CD4-positive, alpha-beta memory T cell (primary cell): ENCODE measurements at regions of chr5 and their contacts with region 1.

Region 1: GRCh38 chr5:65861830-65862241 is 64.5 kb upstream of the ERBIN start:
- DNase-seq: no peak
- H3K4me3 ChIP-seq: no peak overlapping the region
- H3K4me3 Mint-ChIP-seq: no peak overlapping the region
- H3K27ac ChIP-seq: no peak overlapping the region
- H3K27ac Mint-ChIP-seq: no peak overlapping the region
- H3K4me1 ChIP-seq: peaks cover 10% of the 10 kb centered on the region
- H3K4me1 Mint-ChIP-seq: peaks cover 11 to 18% (median 14%) of the 10 kb centered on the region in 4 donors
- H3K27me3 ChIP-seq: no peaks in the 10 kb centered on the region
- H3K27me3 Mint-ChIP-seq: peaks cover 0 to 5% of the 10 kb centered on the region in 2 donors

Region 2: DNA sequence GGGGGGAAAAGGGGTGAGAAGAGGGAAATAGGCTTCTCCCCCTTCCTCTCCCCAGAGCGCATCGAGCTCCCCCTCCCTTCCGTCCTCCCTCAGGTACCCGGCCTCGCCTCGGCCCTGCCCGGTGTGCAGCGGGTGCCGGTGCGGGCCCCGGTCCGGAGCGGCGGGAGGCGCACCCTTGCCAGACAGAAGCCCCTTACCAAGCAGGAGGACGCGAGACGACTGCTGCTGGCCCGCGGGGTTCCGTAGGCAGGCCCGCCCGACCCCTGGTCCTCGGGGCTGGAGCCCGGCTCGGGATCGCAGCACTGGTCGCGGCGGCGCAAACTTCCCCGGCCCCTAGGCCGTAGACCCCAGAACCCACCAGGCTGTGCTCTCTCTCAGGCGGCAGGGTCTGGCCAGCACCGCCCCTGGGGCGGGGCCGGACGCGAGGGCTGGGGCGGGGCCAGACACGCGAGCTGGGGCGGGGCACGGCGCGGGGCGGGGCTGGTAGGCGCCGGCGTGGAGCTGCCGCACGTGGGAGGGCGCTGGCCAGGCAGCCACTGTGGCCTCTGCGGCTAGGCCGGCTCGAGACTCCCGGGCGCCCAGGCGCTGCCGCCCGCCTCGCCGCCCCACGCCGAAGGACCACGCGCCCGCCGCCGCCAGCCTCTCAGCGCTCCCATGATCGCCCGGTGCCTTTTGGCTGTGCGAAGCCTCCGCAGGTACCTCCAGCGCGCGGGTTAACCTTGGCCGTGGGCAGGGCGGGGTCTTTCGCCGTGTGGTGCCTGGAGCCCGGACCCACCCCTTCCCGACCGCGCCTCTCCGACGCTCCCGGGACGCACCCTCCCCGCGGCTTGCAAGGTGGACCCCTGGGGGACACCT is 139.9 kb before region 1 on chr5 and contains the starts of genes NLN and SGTB:
- CTCF ChIA-PET with region 1: no interaction called
- POLR2A ChIA-PET with region 1: no interaction called
- intact Hi-C with region 1: no loop called
- DNase-seq: peak; percentile 78 to 86 (median 82)
- H3K4me3 ChIP-seq: peak within 1 kb of the TSS; percentile 57 to 64
- H3K4me3 Mint-ChIP-seq: peak within 1 kb of the TSS; percentile 88 to 98 (median 94)
- H3K27ac ChIP-seq: peak within 1 kb of the TSS; percentile 91
- H3K27ac Mint-ChIP-seq: peak within 1 kb of the TSS in 6 of 7 donors; percentile 75 to 93 (median 90)
- H3K4me1 ChIP-seq: peaks cover 46% of the 10 kb centered on the region
- H3K4me1 Mint-ChIP-seq: peaks cover 9 to 22% (median 14%) of the 10 kb centered on the region in 4 donors
- H3K27me3 ChIP-seq: no peaks in the 10 kb centered on the region
- H3K27me3 Mint-ChIP-seq: no peaks in the 10 kb centered on the region
- total RNA-seq, gene NLN: 2.3 to 2.4 TPM
- total RNA-seq, gene SGTB: 42.6 to 46.5 TPM

Region 3: DNA sequence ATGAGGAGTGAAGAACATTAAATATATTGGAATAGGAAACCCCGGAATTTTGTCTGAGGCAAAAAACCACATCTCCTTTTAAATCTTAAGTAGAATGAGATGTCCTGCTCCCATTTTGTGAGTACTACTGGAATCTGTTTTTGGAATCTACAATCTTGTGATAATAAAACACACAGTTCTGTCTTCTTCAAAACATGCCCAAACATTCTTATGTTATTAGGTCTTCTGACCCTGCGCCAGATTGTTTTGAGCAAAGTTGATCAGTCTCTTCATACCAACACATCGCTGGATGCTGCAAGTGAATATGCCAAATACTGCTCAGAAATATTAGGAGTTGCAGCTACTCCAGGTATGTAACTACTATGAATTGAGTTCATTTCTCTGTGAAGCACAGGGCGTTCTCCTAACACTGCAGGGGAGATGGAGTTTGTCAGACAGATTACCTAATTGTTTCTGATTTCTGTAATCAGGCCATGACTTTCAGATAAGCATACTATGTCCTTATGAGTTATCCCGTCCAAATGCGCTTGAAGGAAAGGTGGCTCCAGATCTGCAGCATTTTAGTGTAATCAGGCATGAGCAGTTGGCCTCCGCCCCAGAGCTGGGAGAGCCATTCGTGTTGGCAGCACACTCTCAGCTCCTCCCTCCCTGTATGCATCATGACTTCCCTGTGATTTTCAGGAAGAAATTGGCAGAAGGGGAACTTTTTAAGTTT is 51.9 kb before region 1 on chr5:
- CTCF ChIA-PET with region 1: interaction called, 3 read pairs
- POLR2A ChIA-PET with region 1: no interaction called
- intact Hi-C with region 1: loop called (anchors 10 kb)
- DNase-seq: no peak
- H3K4me3 ChIP-seq: no peak overlapping the region
- H3K4me3 Mint-ChIP-seq: no peak overlapping the region
- H3K27ac ChIP-seq: no peak overlapping the region
- H3K27ac Mint-ChIP-seq: no peak overlapping the region
- H3K4me1 ChIP-seq: peaks cover 11% of the 10 kb centered on the region
- H3K4me1 Mint-ChIP-seq: peaks cover 6 to 15% (median 12%) of the 10 kb centered on the region in 4 donors
- H3K27me3 ChIP-seq: no peaks in the 10 kb centered on the region
- H3K27me3 Mint-ChIP-seq: no peaks in the 10 kb centered on the region